ENCODE measurements at regions of chr12 and their contacts with region 1.

Region 1: DNA sequence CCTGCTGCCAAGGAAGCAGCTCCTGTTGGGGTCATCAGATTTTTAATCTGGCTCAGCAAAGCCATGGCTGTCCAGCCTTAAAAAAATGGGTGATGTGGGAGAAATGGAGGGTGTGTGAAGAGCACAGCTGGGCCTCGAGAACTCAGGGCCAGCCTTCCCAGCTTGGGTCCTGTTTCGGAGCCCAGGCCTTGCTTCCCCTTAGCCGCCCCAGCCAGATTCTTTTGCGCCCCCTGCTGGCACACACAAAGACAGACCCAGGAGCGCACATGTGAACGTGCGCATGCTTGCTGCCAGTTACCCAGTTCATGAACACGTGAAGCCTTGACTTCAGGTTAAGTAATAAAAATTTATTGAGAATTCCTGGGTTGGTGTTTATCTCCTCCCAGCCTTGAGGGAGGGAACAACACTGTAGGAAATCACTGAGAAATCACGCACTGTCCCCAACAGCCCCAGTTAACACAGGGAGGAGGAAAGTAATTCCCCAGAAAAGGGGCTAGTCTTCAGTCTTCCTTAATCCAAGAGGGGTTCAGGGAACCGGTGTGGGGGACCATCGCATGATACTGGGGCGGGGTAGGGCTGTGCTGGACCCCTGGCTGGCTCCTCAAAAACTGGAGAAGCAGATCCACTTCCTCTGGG is 5.3 kb downstream of the PHB2 start:
- DNase-seq: peak; percentile 78
- H3K4me3 Mint-ChIP-seq: no peak overlapping the region
- H3K27ac Mint-ChIP-seq: peak overlapping the region; percentile 90
- H3K4me1 Mint-ChIP-seq: peaks cover 59% of the 10 kb centered on the region
- H3K27me3 Mint-ChIP-seq: no peaks in the 10 kb centered on the region

Region 2: GRCh38 chr12:6723607-6724396 is 241.3 kb before region 1 on chr12 and contains the start of gene COPS7A:
- intact Hi-C with region 1: loop called (anchors 2 kb)
- DNase-seq: peak; percentile 98
- H3K4me3 Mint-ChIP-seq: peak within 1 kb of the TSS; percentile 92
- H3K27ac Mint-ChIP-seq: peak within 1 kb of the TSS; percentile 91
- H3K4me1 Mint-ChIP-seq: peaks cover 33% of the 10 kb centered on the region
- H3K27me3 Mint-ChIP-seq: no peaks in the 10 kb centered on the region
- total RNA-seq, gene COPS7A: 34.6 and 36.2 TPM in 2 replicates

Region 3: DNA sequence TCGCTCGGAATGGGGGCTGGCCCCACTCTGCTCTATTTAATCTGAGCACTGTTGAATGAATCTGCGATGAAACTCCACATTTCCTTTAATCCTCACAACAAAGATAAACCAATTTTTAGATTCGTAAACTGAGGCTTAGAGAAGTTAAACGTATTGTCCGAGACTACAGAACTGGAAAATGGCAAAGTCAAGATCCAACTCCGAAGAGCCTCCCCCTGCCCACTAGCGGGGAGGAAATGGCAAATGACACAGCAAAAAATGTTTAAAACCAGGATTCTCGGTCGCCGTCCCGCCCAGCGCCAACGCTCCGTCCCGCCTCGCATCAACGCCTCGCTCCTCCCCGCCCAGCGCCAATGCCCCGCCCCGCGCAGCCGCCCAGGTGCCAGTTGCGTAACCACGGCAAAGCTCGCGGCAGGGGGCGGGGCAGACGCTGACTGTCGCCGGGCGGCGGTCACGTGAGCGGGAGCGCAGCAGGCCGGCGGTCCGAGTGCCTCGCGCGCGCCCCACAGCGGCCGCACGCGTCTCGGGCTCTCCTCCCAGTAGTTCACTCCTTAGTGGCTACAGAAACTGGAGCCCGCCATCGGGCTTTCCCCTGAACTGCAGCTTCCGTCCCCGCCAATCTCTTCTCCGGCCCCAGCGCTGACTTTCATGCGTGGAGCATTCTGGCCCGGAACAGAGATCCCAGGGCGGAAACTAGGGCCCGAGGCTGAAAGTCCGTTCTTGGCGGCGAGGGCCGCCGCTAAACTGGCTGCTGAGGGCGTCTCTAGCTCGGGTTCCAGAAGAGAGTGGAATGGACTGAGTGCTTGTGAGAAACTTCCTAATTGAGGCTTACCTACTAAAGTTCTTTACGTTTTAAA is 74.1 kb before region 1 on chr12:
- intact Hi-C with region 1: loop called (anchors 1 kb)
- DNase-seq: peak; percentile 98
- H3K4me3 Mint-ChIP-seq: peak overlapping the region; percentile 84
- H3K27ac Mint-ChIP-seq: peak overlapping the region; percentile 95
- H3K4me1 Mint-ChIP-seq: peaks cover 19% of the 10 kb centered on the region
- H3K27me3 Mint-ChIP-seq: no peaks in the 10 kb centered on the region

Region 4: GRCh38 chr12:6937481-6938297 is 27.5 kb before region 1 on chr12:
- intact Hi-C with region 1: loop called (anchors 1 kb)
- DNase-seq: peak; percentile 91
- H3K4me3 Mint-ChIP-seq: peak overlapping the region; percentile 88
- H3K27ac Mint-ChIP-seq: peak overlapping the region; percentile 98
- H3K4me1 Mint-ChIP-seq: peaks cover 59% of the 10 kb centered on the region
- H3K27me3 Mint-ChIP-seq: no peaks in the 10 kb centered on the region

Region 5: DNA sequence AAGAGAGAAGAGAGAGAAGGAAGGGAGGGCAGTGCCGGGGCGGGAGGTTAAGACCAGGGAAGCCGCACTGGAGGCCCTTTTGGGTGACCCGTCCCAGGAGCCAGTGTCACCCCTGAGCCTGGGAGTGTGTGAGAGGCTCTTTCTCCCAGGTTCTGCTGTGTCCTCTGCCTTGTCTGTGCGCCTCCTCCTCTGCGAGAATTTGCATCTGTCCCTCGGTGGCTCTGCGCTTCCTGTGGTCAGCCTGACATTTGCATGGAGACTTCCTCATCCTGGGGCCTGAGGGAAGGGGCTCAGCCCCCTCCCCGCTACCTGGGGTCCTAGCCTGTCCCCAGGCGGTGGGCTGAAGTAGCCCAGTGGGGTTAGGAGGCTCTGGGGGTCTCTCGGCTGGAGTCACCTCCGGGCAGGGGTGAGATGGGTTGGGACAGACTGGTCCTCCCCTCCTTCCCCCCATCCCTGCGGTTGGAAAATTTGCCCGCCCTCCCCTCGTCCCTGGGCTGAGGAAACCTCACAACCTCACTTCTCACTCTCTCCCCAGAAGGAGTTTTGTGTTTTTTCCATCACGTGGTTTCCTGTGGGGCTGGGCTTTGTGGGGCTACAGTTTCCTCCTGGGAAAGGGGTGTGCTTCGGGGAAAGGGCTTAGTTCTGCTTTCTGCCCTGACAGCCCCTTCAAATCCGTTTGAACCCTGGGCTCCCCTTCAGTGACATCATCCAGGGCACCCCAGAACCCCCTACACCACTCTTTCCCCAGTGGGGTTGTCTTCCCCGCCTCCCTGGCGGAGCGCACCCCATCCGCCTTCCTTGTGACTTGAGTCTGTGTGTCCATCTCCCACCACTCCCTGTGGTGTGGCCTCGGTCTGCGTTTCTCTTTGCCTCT is 11.5 kb before region 1 on chr12:
- intact Hi-C with region 1: loop called (anchors 1 kb)
- DNase-seq: peak; percentile 79
- H3K4me3 Mint-ChIP-seq: peak overlapping the region; percentile 98
- H3K27ac Mint-ChIP-seq: peak overlapping the region; percentile 97
- H3K4me1 Mint-ChIP-seq: peaks cover 80% of the 10 kb centered on the region
- H3K27me3 Mint-ChIP-seq: no peaks in the 10 kb centered on the region

Region 6: GRCh38 chr12:7108796-7109571 is 143.8 kb after region 1 on chr12 and contains the start of gene C1RL:
- intact Hi-C with region 1: loop called (anchors 1 kb)
- DNase-seq: peak; percentile 71
- H3K4me3 Mint-ChIP-seq: peak within 1 kb of the TSS; percentile 94
- H3K27ac Mint-ChIP-seq: peak within 1 kb of the TSS; percentile 91
- H3K4me1 Mint-ChIP-seq: peaks cover 55% of the 10 kb centered on the region
- H3K27me3 Mint-ChIP-seq: no peaks in the 10 kb centered on the region
- total RNA-seq, gene C1RL: 21.5 and 21.8 TPM in 2 replicates

Measured in activated T-helper 1 cell treated with anti-CD3 and anti-CD28 coated beads, Interleukin-12 subunit alpha, Interleukin-12 subunit beta, Interleukin-2, Interleukin-4 antibody, amounts not matched to agents 30 ng/mL and 10 ng/mL and 1 ng/mL, durations not matched to agents 14 hours and 24 hours and 36 hours (primary cell).